Mammary epithelial cell (primary cell): ENCODE measurements at regions of chr20 and their contacts with region 1.

Region 1: DNA sequence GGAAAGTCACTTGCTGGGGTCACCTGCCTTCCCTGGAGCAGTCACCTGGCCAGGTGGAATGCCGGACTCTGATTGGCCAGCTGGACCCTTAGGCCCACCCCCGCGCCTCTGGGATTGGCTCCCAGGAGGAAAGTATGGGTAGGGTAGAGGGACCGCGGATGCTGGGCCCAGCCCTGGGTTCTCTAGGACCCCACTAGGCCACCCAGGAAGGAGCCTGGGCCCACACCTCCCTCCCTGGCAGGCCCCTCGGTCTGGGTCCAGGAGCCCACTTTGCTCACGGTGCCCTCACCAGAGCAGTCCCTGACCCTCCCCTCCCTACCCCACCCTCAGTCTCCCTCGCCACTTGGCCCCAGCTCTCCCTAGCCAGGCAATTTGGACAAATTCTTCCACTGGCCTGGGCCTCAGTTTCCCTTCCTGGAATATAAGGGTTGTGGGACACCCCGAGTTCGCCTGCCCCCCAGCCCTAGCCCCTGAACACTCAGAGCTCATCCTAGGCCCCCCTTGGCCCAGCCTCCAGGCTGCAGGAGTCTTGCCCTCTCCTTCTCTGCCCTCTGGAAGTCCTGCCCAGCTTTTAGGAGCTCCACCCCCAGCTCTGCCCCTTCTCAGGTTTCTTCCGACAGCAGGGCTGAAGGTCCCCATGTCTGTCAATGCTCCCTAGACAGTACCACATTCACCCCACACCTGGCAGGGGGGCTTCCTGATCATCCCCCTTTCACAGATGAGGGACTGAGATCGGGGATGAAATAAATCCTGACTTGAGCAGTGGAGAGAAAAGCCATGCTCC is 299.6 kb downstream of the TAF4 start:
- DNase-seq: no peak
- H3K4me3 ChIP-seq: no peak overlapping the region
- H3K27ac ChIP-seq: no peak overlapping the region
- H3K4me1 ChIP-seq: no peaks in the 10 kb centered on the region
- H3K27me3 ChIP-seq: no peaks in the 10 kb centered on the region
- CTCF ChIP-seq: no peak

Region 2: DNA sequence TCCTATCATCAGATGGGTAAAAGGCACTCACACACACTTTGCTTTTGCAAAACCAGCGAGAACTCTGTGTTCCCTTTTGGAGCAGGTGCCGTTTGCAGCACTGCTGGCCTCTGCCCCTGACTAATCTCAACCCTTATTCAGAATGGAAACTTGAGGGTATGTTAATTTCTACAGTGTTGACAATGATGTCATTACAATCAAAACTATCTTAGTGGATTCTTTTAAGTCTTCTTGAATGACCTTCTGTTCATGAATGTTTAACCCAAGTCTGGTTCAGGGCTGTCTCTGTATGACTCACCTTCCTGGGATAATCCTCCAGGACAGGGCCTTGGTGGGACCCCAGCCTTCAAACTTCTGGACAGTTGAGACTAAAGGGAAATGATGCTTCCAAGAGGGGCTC is 316.1 kb before region 1 on chr20:
- CTCF ChIA-PET with region 1: no interaction called
- dilution Hi-C with region 1: loop called (anchors 10 kb)
- in situ Hi-C with region 1: no loop called
- intact Hi-C with region 1: no loop called
- DNase-seq: no peak
- H3K4me3 ChIP-seq: no peak overlapping the region
- H3K27ac ChIP-seq: no peak overlapping the region
- H3K4me1 ChIP-seq: no peaks in the 10 kb centered on the region
- H3K27me3 ChIP-seq: no peaks in the 10 kb centered on the region
- CTCF ChIP-seq: no peak

Region 3: DNA sequence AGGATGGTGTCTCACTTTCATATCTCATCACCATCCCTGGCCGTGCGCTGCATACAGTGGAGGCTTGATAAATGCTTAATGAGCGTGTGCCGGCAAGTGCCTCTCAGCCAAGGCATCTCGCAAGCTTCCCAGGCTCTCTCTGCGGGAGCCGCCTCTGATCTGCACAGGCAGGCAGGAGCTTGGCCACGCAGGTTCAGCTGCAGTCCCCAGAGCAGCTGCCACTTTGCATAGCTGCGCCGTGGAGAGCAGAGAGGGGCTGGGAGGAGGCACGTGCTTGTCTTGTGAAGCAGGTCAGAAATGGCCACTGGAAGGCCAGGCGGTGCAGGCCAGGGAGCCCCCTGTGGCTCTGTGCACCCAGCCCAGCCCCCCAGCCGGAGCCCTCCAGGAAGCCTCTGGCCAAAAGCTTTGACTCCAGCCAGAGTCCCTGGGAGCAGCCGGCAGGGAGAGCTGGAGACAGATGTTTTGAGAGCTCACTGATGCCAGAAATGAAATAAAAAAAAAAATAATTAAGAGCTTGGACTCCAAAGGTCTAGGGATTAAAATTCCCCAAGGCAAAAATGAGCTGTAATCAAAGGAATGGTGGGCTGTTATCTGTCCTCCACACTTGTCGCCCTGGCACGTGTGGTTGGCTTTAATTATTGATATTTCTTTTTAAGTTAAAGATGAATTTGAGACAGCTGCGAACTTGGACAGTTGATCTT is 137.0 kb before region 1 on chr20:
- CTCF ChIA-PET with region 1: no interaction called
- dilution Hi-C with region 1: no loop called
- in situ Hi-C with region 1: no loop called
- intact Hi-C with region 1: no loop called
- DNase-seq: peak; percentile 27
- H3K4me3 ChIP-seq: no peak overlapping the region
- H3K27ac ChIP-seq: no peak overlapping the region
- H3K4me1 ChIP-seq: no peaks in the 10 kb centered on the region
- H3K27me3 ChIP-seq: no peaks in the 10 kb centered on the region
- CTCF ChIP-seq: no peak

Region 4: GRCh38 chr20:61683721-61684120 is 82.3 kb before region 1 on chr20:
- CTCF ChIA-PET with region 1: no interaction called
- dilution Hi-C with region 1: loop called (anchors 5 kb)
- in situ Hi-C with region 1: no loop called
- intact Hi-C with region 1: no loop called
- DNase-seq: peak; percentile 79
- H3K4me3 ChIP-seq: no peak overlapping the region
- H3K27ac ChIP-seq: peak overlapping the region; percentile 36
- H3K4me1 ChIP-seq: peaks cover 29% of the 10 kb centered on the region
- H3K27me3 ChIP-seq: no peaks in the 10 kb centered on the region
- CTCF ChIP-seq: peak in 1 of 2 donors; percentile 26

Region 5: DNA sequence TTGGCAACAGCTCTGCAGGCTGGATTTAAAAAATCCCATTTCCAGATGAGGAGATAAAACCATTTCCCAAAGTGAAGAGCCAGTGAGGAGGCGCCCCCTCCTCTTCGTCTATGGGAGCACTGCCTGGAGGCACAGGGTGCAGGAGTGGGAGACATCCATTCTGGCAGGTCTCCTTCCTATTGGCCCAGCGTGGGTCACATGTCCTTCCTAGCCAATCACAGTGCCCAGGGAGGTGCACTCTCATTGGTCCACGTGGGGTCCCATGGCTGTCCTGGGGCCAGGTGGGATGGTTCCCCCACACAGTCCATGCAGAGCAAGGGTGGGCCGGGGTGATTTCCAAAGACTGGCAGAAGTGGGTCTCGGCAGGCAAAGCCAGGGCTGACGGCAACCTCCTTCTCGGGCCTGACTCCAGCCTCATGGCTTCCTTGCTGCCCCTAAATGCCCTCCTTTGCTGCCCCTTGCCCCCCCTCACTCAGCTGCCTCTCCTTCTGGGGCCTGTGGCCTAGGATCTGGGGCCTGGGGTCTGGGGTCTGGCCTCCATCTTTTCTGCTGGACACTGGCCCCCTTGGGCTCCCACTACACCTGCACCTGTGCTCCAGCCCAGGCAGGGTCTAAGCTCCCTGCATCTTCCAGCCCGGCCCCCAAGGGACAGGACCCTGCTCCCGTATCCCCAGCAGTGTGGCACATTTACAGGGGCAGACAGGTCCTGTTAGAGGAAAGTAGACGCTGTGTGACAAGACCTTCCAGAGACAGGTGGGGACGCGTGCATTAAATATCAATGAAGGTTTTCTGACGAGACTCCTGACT is 67.9 kb after region 1 on chr20:
- CTCF ChIA-PET with region 1: no interaction called
- dilution Hi-C with region 1: loop called (anchors 5 kb)
- in situ Hi-C with region 1: no loop called
- intact Hi-C with region 1: no loop called
- DNase-seq: no peak
- H3K4me3 ChIP-seq: no peak overlapping the region
- H3K27ac ChIP-seq: no peak overlapping the region
- H3K4me1 ChIP-seq: no peaks in the 10 kb centered on the region
- H3K27me3 ChIP-seq: no peaks in the 10 kb centered on the region
- CTCF ChIP-seq: no peak

Region 6: DNA sequence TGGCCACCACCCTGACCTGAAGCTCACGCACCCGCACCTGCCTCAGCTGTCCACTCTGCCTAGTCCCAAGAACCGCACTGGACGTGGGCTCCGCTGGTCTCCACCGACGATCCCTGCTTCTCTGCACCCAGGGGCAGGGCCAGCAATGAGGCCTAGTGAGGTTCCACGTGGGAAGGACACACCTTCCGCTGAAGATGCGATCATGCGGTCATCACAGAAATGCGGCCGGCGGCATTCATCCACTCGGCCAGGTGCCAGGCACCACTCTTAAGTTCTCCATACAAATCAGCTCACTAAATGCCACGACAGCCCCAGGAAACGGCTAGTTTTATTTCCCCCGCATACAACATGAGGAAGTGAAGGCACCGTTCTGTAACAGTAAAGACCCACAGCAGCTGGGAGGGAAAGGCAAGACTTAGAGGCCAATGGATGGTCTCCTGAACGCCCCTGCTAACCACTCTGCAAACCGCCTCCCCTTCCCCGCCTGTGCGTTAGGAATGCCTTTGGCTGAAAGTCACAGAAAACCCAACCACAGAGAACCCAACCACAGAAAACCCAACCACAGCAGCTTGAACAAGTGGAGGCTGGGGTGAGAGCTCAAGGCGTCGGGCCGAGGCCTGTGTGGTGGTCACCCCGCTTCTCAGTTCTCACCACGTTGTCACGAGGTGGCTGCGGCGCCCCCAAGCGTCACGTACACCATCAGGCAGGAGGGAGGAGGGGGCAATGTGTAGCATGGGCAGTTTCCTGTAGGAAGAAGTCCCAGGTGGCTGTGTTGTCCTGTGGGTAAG is 95.2 kb after region 1 on chr20:
- CTCF ChIA-PET with region 1: no interaction called
- dilution Hi-C with region 1: no loop called
- in situ Hi-C with region 1: no loop called
- intact Hi-C with region 1: no loop called
- DNase-seq: no peak
- H3K4me3 ChIP-seq: no peak overlapping the region
- H3K27ac ChIP-seq: no peak overlapping the region
- H3K4me1 ChIP-seq: no peaks in the 10 kb centered on the region
- H3K27me3 ChIP-seq: no peaks in the 10 kb centered on the region
- CTCF ChIP-seq: no peak

Region 7: GRCh38 chr20:61874501-61875026 is 108.5 kb after region 1 on chr20:
- CTCF ChIA-PET with region 1: no interaction called
- dilution Hi-C with region 1: no loop called
- in situ Hi-C with region 1: no loop called
- intact Hi-C with region 1: loop called (anchors 10 kb)
- DNase-seq: peak; percentile 67
- H3K4me3 ChIP-seq: no peak overlapping the region
- H3K27ac ChIP-seq: no peak overlapping the region
- H3K4me1 ChIP-seq: peaks cover 5% of the 10 kb centered on the region
- H3K27me3 ChIP-seq: no peaks in the 10 kb centered on the region
- CTCF ChIP-seq: peak; percentile 50 to 88